Heart right ventricle (tissue), 16 donors: ENCODE measurements at regions of chr1 and their contacts with region 1.

Region 1: DNA sequence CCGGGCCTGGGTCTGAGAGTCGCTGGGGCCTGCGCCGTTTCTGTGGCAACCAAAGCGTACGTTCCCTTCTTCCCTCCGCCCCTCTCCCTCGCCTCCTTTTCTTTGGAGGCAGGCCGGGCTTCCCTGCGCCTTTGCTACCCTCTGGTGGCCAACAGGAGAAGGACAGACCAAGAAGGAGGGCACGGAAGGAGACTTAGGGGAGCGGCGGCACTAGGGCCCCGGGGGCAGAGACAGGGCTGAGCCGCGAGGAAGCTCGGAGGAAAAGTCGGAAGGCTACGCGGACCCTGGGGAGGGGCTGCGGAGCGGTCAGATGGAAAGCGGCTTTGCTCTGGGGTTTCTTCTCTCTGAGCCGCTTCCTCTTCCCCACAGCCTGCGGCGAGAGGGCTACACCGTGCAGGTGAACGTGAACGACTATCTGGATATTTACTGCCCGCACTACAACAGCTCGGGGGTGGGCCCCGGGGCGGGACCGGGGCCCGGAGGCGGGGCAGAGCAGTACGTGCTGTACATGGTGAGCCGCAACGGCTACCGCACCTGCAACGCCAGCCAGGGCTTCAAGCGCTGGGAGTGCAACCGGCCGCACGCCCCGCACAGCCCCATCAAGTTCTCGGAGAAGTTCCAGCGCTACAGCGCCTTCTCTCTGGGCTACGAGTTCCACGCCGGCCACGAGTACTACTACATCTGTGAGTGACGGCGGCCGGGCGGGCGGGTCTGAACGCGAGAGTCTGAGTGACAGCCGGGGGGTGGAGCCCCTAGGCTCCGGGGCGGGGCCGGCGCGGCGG is 6.3 kb downstream of the EFNA3 start:
- DNase-seq: peak; percentile 91 to 94
- ATAC-seq: peak; percentile 86 to 93 (median 90)
- H3K4me3 ChIP-seq: peak overlapping the region; percentile 33 to 82 (median 72)
- H3K27ac ChIP-seq: peak overlapping the region; percentile 67 to 92 (median 88)
- H3K4me1 ChIP-seq: peaks cover 23 to 62% (median 49%) of the 10 kb centered on the region in 9 donors
- H3K27me3 ChIP-seq: peaks cover 36 to 46% (median 46%) of the 10 kb centered on the region in 7 donors
- CTCF ChIP-seq: peak; percentile 82 to 97 (median 92)

Region 2: DNA sequence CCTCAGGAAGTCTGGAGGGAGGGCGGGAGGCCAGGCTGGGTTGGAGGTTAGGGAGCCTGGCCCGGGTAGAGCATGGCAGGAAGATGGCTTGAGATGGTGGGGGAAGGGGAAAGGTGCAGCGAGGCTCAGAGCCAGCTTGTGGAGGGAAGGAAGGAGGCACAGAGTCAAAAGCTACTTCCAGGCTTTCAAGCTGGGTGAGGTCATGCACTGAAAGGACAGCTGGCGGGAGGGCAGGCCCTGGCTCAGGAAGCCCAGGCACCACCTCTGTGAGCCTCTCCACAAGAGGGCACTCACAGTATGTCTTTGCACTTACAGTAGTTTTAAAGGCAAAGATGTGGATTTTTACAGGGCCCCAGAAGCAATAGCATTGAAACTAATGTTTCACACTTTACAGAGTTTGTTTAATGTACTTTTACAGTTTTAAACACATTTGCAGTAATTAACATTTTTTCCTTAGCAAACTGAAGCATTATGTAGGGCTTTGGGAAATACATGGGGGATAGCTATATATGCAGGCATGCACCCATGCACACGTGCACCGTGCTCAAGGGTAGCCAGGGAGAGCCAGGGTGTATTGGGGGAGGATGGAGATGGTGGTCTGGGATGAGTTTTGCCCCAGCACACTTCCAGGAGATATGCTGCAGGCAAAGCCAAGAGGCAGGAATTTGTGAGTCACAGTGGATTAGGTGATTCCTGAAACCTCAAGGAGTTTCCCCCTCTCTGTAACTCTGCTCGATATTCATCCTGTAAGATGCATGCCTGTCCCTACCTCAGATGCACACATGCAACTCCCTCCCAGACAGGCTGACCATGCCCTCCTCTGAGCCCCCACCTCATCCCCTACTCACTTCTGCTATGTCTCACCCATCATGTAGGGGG is 39.9 kb before region 1 on chr1:
- intact Hi-C with region 1: loop called in 8 of 10 experiments (anchors 1 to 5 kb)
- DNase-seq: peak; percentile 72 to 85
- ATAC-seq: peak; percentile 89 to 96 (median 93)
- H3K4me3 ChIP-seq: no peak overlapping the region
- H3K27ac ChIP-seq: peak overlapping the region in 7 of 10 donors; percentile 5 to 63 (median 48)
- H3K4me1 ChIP-seq: peaks cover 4 to 21% (median 16%) of the 10 kb centered on the region in 9 donors
- H3K27me3 ChIP-seq: no peaks in the 10 kb centered on the region
- CTCF ChIP-seq: peak; percentile 64 to 90 (median 80)

Region 3: DNA sequence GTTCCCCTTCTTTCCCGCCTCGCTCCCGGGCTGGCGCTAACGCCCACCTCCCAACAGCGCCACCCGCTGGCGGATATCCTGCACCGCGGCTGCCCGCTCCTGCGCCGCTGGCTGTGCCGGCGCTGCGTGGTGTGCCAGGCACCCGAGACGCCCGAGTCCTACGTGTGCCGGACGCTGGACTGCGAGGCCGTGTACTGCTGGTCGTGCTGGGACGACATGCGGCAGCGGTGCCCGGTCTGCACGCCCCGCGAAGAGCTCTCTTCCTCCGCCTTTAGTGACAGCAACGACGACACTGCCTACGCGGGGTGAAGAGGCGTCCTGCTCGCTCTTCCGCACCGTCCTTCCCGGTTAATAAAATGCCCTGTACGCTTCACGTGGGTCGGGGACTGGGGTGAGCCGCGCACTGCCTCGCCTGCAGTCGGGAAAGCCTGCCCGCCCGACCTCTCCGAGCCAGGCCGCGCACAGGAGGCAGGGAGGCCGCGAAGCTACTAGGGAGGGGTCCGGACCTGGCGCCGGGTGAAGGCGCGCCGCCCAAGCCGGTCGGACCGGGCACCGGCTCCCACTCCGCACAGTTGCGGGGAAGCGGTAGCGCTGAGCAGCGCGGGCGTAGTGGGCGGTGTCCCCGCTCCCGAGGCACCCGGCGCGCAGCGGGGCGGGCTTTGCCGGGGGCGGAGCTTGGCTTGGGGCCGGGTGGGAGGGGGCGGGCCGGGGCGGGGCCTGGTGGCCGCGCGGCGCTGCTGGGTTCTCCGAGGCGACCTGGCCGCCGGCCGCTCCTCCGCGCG is 34.2 kb before region 1 on chr1 and contains the start of gene ADAM15:
- intact Hi-C with region 1: loop called in 8 of 10 experiments (anchors 1 to 5 kb)
- DNase-seq: peak; percentile 82 to 88
- ATAC-seq: peak; percentile 73 to 91 (median 82)
- H3K4me3 ChIP-seq: peak within 1 kb of the TSS; percentile 51 to 98 (median 84)
- H3K27ac ChIP-seq: peak within 1 kb of the TSS; percentile 53 to 98 (median 94)
- H3K4me1 ChIP-seq: peaks cover 12 to 45% (median 27%) of the 10 kb centered on the region in 9 donors
- H3K27me3 ChIP-seq: no peaks in the 10 kb centered on the region
- CTCF ChIP-seq: peak; percentile 85 to 96 (median 92)
- total RNA-seq, gene ADAM15: 46.7 to 146 (median 58.5) TPM

Region 4: GRCh38 chr1:155063550-155064110 is 21.3 kb before region 1 on chr1 and contains the start of gene EFNA4:
- intact Hi-C with region 1: loop called in 2 of 10 experiments (anchors 1 to 2 kb)
- DNase-seq: peak; percentile 82 to 89
- ATAC-seq: peak; percentile 82 to 89 (median 87)
- H3K4me3 ChIP-seq: peak within 1 kb of the TSS; percentile 43 to 97 (median 84)
- H3K27ac ChIP-seq: peak within 1 kb of the TSS in 9 of 10 donors; percentile 23 to 91 (median 76)
- H3K4me1 ChIP-seq: peaks cover 16 to 47% (median 33%) of the 10 kb centered on the region in 9 donors
- H3K27me3 ChIP-seq: no peaks in the 10 kb centered on the region
- CTCF ChIP-seq: no peak
- total RNA-seq, gene EFNA4: 0.49 to 2.8 (median 1.8) TPM

Region 5: DNA sequence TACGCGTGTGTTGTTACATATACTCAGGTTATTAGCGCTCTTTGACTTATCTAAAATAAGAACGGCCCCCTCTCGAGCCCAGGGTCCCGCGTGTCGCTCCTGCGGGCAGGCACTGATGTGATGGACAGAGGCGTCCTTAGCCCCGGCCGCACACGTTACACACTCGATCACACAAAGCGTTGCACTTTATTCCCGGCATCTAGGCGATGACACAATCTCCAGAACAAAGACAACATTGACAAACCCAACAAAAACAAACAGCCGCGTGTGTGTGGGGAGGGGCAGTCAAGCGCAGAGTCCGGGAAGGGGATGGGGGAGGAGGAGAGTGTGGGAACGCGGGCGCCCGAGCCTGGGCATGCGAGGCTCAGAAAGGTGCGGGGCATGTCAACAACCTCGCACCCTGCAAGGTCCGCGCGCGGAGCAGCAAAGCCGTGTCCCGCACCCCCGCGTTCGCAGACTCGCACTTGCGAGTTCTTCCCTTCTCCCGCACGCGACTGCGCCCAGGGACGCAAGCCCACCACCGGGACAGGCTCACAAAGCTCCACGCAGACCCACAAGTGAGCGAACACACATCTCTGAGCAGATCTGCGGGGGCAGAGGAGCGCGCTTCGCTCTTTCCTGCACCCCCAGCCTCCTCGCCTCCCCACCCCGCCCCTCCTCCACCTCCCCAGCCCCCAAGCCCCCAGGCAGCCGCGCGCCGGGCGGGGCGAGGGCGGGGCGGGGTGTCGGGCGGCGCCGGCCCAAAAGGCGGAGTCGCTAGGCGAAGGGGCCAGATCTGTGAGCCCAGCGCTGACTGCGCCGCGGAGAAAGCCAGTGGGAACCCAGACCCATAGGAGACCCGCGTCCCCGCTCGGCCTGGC is 42.4 kb after region 1 on chr1 and contains the start of gene EFNA1:
- intact Hi-C with region 1: loop called in 8 of 10 experiments (anchors 2 to 5 kb)
- DNase-seq: peak; percentile 75 to 81
- ATAC-seq: peak; percentile 60 to 73 (median 70)
- H3K4me3 ChIP-seq: peak within 1 kb of the TSS; percentile 47 to 93 (median 79)
- H3K27ac ChIP-seq: peak within 1 kb of the TSS; percentile 81 to 99 (median 94)
- H3K4me1 ChIP-seq: peaks cover 17 to 73% (median 59%) of the 10 kb centered on the region in 9 donors
- H3K27me3 ChIP-seq: peaks cover 0 to 55% (median 0%) of the 10 kb centered on the region in 7 donors
- CTCF ChIP-seq: peak in 1 of 9 donors; percentile 1
- total RNA-seq, gene EFNA1: 28.9 to 50.0 (median 35.6) TPM

Region 6: GRCh38 chr1:155135415-155136028 is 50.6 kb after region 1 on chr1 and contains the start of gene SLC50A1:
- intact Hi-C with region 1: loop called in 2 of 10 experiments (anchors 5 kb)
- DNase-seq: peak; percentile 94 to 95
- ATAC-seq: peak; percentile 89 to 95 (median 94)
- H3K4me3 ChIP-seq: peak within 1 kb of the TSS; percentile 29 to 76 (median 66)
- H3K27ac ChIP-seq: peak within 1 kb of the TSS; percentile 82 to 100 (median 98)
- H3K4me1 ChIP-seq: peaks cover 14 to 90% (median 76%) of the 10 kb centered on the region in 9 donors
- H3K27me3 ChIP-seq: no peaks in the 10 kb centered on the region
- CTCF ChIP-seq: peak in 7 of 9 donors; percentile 20 to 64 (median 41)
- total RNA-seq, gene SLC50A1: 5.5 to 16.8 (median 7.9) TPM

Region 7: DNA sequence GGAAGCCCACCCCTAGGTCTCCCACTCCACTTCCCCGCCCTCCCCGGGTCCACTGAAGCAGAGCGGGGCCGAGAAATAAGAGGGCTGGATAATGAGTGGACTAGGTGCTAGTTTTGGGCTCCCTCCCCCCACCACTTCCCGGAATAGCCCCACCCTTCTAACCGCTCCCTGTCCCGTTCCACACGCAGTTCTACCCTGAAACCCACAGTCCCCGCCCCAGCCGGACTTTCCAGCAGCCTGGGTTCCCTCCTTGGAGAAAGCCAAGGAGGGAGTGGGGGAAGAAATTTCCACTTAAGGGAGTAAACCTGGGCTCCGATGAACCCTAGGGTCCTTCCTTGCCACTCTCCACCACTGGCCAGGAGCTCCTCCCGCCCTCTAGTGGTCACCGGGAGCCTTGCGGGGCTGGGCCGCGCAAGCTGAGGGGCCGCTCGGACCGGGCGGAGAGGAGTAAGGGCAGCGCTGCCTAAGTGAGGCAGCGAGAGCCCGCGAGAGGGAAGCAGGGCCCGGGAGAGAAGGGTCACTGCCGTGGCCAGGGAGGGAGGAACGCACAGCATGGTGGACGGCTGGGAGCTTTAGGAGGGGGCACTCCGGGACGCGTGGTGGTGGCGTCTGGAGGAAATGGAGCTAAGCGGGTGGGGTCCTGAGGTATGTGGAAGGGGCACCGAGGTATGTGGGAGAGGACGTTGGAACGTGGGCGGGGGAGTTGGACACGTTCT is 108.5 kb after region 1 on chr1:
- intact Hi-C with region 1: no loop called
- DNase-seq: peak; percentile 87 to 90
- ATAC-seq: peak; percentile 84 to 93 (median 88)
- H3K4me3 ChIP-seq: peak overlapping the region in 9 of 10 donors; percentile 37 to 77 (median 60)
- H3K27ac ChIP-seq: peak overlapping the region; percentile 66 to 91 (median 86)
- H3K4me1 ChIP-seq: peaks cover 6 to 40% (median 29%) of the 10 kb centered on the region in 9 donors
- H3K27me3 ChIP-seq: no peaks in the 10 kb centered on the region
- CTCF ChIP-seq: peak; percentile 94 to 99 (median 98)

Region 8: DNA sequence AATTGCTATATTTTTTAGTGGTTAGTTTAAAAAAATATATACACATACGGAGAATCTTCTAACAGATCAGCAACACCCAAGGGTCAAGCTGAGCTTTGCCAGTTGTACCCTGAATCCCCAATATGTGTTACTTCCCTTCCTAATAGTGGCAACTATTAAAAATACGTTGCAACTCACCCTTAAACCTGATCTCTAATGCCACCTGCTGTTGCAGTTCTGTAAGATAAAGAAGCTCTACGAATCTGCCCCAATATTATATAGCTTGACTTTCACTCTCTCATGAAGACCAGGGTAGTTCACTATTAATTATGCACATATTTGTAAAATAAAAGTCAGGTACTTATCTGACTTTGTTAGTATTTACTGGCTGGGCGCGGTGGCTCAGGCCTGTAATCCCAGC is 419.3 kb after region 1 on chr1:
- intact Hi-C with region 1: no loop called
- DNase-seq: no peak
- ATAC-seq: peak in 4 of 8 donors; percentile 40 to 57 (median 54)
- H3K4me3 ChIP-seq: no peak overlapping the region
- H3K27ac ChIP-seq: no peak overlapping the region
- H3K4me1 ChIP-seq: peaks cover 0 to 61% (median 36%) of the 10 kb centered on the region in 9 donors
- H3K27me3 ChIP-seq: no peaks in the 10 kb centered on the region
- CTCF ChIP-seq: peak in 7 of 9 donors; percentile 30 to 57 (median 45)